GM10248 (cell line): ENCODE measurements at regions of chr6 and their contacts with region 1.

Region 1: GRCh38 chr6:35731736-35732532 is 4.9 kb upstream of the ARMC12 start:
- DNase-seq: peak; percentile 91
- CTCF ChIP-seq: no peak

Region 2: DNA sequence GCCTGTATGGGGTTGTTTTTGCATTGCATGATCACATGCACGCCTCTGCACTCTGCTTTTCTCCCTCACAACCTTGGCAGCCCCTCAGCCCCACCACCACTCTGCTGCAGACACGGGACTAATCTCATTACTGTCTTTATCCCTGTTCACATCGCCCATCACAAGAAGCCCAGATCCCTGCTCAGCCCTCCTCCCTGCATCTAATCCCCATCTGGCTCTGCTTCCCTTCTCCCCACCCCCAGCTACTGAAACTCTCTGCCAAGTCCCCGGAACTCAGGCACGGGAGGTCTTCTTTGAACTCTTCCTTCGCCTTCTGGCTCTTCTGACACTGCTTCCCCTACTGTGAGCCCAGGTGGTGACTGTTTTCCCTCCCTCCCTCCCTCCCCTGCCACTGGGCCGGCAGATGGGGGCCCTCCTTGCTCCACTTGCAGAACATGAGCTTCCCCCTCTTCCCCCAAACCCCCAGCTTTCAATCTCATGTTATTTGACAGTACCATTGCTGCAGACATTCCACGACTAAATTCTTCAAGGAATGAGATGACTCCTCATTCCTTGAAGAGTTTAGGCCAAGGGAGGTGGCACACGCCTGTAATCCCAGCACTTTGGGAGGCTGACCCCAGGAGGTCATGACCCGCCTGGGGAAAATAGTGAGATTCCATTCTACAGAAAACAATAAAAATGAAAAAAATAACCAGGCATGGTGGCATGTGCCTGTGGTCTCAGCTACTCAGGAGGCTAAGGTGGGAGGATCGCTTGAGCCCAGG is 197.3 kb before region 1 on chr6:
- CTCF ChIA-PET with region 1: interaction called, 12 read pairs
- POLR2A ChIA-PET with region 1: no interaction called
- DNase-seq: no peak
- CTCF ChIP-seq: no peak

Region 3: GRCh38 chr6:35590622-35591066 is 141.3 kb before region 1 on chr6:
- CTCF ChIA-PET with region 1: interaction called, 213 read pairs
- POLR2A ChIA-PET with region 1: interaction called, 5 read pairs
- DNase-seq: no peak
- CTCF ChIP-seq: no peak

Region 4: GRCh38 chr6:35629876-35630378 is 102.0 kb before region 1 on chr6:
- CTCF ChIA-PET with region 1: interaction called, 11 read pairs
- POLR2A ChIA-PET with region 1: no interaction called
- DNase-seq: no peak
- CTCF ChIP-seq: no peak

Region 5: GRCh38 chr6:35669451-35670045 is 62.4 kb before region 1 on chr6:
- CTCF ChIA-PET with region 1: interaction called, 16 read pairs
- POLR2A ChIA-PET with region 1: no interaction called
- DNase-seq: no peak
- CTCF ChIP-seq: no peak

Region 6: DNA sequence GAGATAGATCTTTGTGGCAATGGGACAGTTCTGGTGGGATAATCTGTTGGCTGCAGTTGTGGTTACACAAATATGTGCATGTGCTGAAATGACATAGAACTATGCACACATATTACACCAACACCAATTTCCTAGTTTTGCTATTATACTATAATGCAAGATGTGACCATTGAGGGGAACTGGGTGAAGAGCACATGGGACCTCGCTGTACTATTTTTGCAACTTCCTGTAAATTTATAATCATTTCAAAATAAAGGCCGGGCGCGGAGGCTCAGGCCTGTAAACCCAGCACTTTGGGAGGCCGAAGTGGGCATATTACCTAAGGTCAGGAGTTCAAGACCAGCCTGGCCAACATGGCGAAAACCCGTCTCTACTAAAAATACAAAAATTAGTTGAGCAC is 13.6 kb after region 1 on chr6:
- CTCF ChIA-PET with region 1: interaction called, 67 read pairs
- POLR2A ChIA-PET with region 1: no interaction called
- DNase-seq: no peak
- CTCF ChIP-seq: no peak

Region 7: GRCh38 chr6:35876902-35877301 is 145.0 kb after region 1 on chr6:
- CTCF ChIA-PET with region 1: no interaction called
- POLR2A ChIA-PET with region 1: no interaction called
- DNase-seq: no peak
- CTCF ChIP-seq: no peak

Region 8: DNA sequence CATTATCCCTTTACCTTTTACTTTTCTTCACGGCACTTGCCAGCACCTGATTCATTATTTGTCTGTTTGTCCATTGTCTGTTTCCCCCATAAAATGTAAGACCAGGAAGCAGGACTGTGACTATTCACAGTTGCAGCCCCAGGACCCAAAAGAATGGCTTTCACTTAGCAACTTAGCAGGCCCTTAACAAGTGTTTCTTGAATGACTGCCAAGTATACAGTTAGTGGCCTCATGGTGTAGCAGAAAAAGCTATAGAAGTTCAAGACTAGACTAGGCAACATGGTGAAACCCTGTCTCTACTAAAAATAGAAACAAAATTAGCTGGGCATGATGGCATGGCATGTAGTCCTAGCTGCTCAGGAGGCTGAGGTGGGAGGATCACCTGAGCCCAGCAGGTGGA is 288.2 kb after region 1 on chr6:
- CTCF ChIA-PET with region 1: no interaction called
- POLR2A ChIA-PET with region 1: no interaction called
- DNase-seq: no peak
- CTCF ChIP-seq: no peak